ENCODE measurements at regions of chr11 and their contacts with region 1.

Region 1: GRCh38 chr11:23555085-23555484 is 694.8 kb upstream of the CCDC179 start:
- DNase-seq: no peak
- H3K4me3 ChIP-seq: no peak overlapping the region
- H3K27ac ChIP-seq: no peak overlapping the region
- H3K4me1 ChIP-seq: no peaks in the 10 kb centered on the region
- H3K27me3 ChIP-seq: no peaks in the 10 kb centered on the region

Region 2: DNA sequence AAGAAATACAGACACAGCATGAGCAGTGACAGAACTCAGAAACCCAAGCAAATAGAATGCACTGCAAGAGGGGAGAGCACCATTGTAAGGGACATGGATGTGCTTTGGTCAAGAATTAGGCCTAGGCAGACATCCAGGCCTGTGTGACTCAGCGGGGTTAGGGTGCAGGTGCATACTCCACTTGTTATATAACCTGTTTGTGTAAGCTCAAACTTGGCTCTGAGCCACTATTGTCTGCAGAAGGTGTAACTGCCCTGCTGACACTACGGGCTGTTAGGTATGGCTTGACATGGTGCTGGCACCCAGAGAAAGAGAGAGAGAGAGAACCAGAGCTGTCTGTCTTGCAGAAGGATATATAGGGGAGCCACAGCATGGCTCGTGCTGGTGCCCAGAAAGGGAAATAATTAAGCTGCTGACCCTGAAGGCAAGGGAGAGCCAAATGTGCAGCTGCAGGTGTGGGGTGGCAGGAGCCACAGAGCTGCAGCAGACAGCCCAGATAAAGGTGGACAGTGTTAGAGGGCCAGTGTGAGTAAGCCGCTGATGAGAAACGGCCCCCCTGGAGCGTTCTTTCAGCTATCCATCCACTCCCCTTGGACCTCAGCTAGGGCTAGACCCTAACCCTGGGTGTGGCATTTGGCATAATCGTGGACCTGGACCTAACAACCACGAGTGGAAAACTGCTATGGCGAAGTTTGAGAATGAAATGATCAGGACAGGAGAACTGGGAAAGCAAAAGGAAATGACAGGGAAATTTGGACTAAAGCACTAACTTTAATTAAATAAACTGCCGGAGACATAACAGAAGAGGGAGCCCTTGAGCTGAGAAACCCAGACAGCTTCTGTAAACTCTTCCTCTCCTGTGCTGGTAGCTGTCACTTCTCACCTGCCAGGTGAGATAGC is 441.8 kb before region 1 on chr11:
- CTCF ChIA-PET with region 1: interaction called, 12 read pairs
- POLR2A ChIA-PET with region 1: no interaction called
- DNase-seq: peak; percentile 35 to 63 (median 52)
- H3K4me3 ChIP-seq: peak overlapping the region in 1 of 7 experiments; percentile 57
- H3K27ac ChIP-seq: no peak overlapping the region
- H3K4me1 ChIP-seq: peaks cover 0 to 9% (median 4%) of the 10 kb centered on the region in 4 experiments
- H3K27me3 ChIP-seq: no peaks in the 10 kb centered on the region

Region 3: DNA sequence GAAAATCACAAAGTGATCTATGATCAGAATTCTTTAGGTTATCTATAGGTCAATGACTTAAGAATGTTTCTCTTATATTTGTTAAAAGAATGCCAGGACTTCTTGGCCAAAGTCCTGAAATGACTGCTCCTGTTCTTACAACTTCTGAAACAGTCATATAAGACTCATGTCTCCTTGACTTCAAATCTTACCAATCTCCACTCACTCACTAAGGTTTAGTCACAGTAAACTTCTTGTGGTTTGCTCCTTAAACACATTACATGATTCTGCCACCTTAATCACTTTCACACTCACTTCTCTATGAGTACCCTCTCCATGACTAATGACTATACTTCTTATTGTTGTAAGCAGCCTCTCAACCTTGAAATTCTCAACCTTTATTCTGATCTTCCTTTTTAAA is 46.1 kb before region 1 on chr11:
- CTCF ChIA-PET with region 1: no interaction called
- POLR2A ChIA-PET with region 1: no interaction called
- DNase-seq: no peak
- H3K4me3 ChIP-seq: no peak overlapping the region
- H3K27ac ChIP-seq: no peak overlapping the region
- H3K4me1 ChIP-seq: no peaks in the 10 kb centered on the region
- H3K27me3 ChIP-seq: no peaks in the 10 kb centered on the region

Region 4: GRCh38 chr11:23520226-23520960 is 34.7 kb before region 1 on chr11:
- CTCF ChIA-PET with region 1: no interaction called
- POLR2A ChIA-PET with region 1: no interaction called
- DNase-seq: no peak
- H3K4me3 ChIP-seq: no peak overlapping the region
- H3K27ac ChIP-seq: no peak overlapping the region
- H3K4me1 ChIP-seq: no peaks in the 10 kb centered on the region
- H3K27me3 ChIP-seq: no peaks in the 10 kb centered on the region

Region 5: GRCh38 chr11:23540101-23540561 is 15.0 kb before region 1 on chr11:
- CTCF ChIA-PET with region 1: interaction called, 14 read pairs
- POLR2A ChIA-PET with region 1: no interaction called
- DNase-seq: peak; percentile 42 to 70 (median 68)
- H3K4me3 ChIP-seq: peak overlapping the region in 1 of 7 experiments; percentile 58
- H3K27ac ChIP-seq: no peak overlapping the region
- H3K4me1 ChIP-seq: peaks cover 0 to 10% (median 2%) of the 10 kb centered on the region in 4 experiments
- H3K27me3 ChIP-seq: no peaks in the 10 kb centered on the region